Left colon (tissue), 2 donors: ENCODE measurements at regions of chr18 and their contacts with region 1.

Region 1: DNA sequence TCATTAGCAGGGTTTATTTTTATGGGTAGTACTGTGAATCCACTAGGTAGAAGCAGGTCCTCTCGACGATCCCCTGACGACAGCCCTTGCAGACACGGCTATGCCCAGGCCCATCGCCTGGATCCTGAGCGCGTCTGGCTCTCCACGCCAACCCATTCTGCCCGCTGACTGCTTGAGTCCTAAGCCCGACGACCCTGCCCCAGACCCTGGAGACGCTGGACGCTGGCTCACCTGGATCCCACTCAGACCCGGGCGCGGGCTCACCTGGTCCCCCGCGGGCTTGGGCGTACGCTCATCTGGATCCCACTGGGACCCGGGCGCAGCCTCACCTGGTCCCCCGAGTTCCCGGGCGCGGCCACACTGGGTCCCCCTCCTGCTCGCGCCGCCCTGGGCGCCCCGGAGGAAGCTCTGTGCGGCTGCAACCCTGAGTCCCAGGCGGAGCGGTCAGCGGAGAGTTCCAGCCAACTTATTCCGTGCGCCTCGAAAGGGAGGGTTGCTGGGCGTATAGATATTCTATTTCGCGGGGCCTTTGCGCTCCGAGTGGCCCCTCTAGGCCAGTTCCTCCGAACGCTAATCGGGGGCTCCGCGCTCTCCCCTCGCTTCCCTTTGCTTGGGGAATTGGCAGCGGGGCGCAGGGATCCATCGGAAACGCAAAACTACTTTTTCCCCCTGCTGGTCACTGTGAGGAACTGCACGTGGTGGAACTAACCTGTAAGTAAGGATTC is 22.4 kb upstream of the RMP24 start:
- DNase-seq: peak in 1 of 2 donors; percentile 43
- ATAC-seq: peak; percentile 75

Region 2: DNA sequence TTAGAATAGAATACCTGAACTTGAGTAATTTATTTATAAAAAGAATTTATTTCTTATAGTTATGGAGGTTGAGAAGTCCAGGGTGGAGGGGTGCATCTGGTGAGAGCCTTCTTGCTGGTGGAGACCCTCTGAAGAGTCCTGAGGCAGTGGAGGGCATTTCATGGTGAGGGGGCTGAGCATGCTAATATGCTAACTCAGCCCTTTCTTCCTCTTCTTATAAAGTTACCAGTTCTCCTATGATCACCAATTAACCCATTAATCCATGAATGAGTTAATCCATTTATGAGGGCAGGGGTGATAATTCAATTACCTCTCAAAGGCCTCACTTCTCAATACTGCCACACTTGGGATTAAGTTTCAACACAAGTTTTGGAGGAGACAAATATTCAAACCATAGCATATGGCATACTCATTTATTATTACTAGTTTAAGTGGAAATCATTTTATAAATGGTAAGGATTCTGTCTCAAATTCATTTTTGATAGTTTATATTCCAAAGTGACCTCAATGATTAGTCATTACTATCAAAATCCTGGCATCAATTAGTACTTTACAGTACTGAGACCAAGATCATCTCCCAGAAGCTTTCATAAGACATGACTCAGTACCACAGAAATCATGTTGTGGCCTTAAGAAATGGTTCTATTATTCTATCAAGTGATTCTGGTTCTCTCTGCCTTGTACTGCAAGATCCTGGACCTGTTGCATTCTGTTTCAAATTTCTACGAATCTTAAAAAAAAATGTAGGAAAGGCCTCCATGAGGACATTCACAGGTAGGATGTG is 578.5 kb before region 1 on chr18:
- intact Hi-C with region 1: no loop called
- DNase-seq: no peak
- ATAC-seq: no peak

Region 3: DNA sequence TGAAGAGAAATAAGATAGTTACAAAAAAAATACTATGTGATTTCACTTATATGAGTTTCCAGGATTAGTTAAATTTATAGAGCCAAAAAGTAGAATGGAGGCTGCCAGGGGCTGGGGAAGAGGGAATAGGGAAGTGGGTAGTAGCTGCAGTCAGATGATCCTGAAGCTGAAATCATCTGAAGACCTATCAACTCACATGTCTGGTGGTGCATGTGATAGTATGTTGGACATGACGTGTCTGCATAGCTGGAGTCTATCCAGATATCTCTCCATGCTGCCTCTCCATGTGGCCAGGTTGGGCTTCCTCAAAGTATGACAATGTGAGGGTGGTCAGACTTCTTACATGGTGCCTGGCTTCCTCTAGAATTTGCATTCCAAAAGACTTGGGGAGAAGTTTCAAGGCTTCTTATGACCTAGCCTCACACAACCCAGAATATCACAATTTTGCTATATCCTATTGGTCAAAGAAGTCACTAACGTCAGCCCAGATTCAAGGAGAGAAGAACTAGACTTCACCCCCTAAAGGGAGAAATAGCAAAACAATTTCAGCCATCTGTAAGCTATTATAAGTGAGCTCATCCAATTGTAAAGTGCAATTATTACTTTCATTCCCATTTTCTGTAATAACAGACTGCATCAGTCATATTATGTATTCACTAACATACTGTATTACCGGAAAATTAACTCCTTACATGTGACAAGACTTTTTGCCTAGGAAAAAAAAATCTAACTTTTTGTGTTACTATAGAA is 558.9 kb before region 1 on chr18:
- intact Hi-C with region 1: loop called in 1 of 2 experiments (anchors 10 kb)
- DNase-seq: no peak
- ATAC-seq: no peak

Region 4: DNA sequence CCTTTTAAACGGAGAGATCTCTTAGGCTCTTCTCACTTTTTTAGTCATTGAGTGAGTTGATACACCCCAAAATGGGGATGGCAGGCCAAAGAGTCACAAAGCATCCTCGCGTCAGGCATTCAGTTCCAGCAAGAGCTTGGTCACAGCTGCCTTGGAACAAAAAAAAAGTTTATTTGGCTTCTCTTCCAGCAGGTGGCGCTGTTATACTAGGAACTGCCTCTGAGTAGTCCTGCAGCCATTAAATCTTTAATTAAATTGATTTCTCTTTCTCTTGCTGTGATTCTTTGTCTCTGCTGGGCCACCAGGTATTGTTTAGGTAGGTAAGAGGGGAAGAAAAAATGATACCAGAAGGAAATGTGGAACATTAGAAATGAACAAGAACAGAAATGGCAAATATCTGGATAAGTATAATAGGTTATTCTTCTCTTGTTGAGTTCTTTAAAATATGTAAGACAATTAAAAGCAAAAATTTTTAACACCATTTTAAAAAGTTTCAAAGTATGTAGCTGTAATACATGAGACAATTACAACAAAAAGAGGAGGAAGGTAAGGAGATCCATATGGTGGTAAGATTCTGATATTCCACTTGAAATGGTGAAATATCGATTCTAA is 193.5 kb before region 1 on chr18:
- intact Hi-C with region 1: loop called in 1 of 2 experiments (anchors 10 kb)
- DNase-seq: peak in 1 of 2 donors; percentile 39
- ATAC-seq: peak; percentile 73